PC-9 (cell line): ENCODE measurements at regions of chr11 and their contacts with region 1.

Region 1: GRCh38 chr11:86919557-86920210 is 35.5 kb downstream of the FZD4 start:
- DNase-seq: peak; percentile 38 to 65
- H3K4me3 ChIP-seq: no peak overlapping the region
- H3K27ac ChIP-seq: no peak overlapping the region
- H3K4me1 ChIP-seq: peaks cover 23% of the 10 kb centered on the region
- H3K27me3 ChIP-seq: no peaks in the 10 kb centered on the region
- CTCF ChIP-seq: peak; percentile 86

Region 2: DNA sequence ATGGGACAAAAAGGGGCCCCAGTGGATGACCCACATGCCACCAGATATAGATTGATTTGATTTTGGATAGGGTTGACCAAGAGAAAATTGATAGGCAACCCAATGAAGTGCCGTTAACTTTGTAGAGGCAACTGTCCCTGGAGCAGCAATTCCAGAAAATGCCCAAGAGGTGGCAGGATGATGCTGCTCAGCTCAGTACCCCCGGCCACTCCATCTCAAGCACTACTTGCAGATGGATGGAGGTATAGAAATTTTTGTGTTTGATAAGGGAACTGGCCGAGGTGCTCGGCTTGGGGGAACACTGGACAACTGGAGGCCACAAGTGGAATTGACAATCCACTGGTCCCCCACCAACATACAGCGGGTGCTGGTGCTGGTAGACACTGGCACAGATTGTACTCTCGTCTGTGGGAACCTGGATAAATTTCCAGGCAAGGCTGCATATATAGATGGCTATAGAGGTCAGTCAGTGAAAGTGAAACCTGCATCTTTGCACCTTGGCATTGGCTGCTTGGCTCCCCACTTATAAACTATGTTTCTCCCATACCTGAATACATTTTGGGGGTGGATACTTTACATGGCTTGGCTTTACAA is 978.2 kb before region 1 on chr11:
- CTCF ChIA-PET with region 1: no interaction called
- POLR2A ChIA-PET with region 1: no interaction called
- intact Hi-C with region 1: loop called (anchors 10 kb)
- DNase-seq: peak in 1 of 2 experiments; percentile 22
- H3K4me3 ChIP-seq: no peak overlapping the region
- H3K27ac ChIP-seq: no peak overlapping the region
- H3K4me1 ChIP-seq: no peaks in the 10 kb centered on the region
- H3K27me3 ChIP-seq: no peaks in the 10 kb centered on the region
- CTCF ChIP-seq: peak; percentile 69

Region 3: DNA sequence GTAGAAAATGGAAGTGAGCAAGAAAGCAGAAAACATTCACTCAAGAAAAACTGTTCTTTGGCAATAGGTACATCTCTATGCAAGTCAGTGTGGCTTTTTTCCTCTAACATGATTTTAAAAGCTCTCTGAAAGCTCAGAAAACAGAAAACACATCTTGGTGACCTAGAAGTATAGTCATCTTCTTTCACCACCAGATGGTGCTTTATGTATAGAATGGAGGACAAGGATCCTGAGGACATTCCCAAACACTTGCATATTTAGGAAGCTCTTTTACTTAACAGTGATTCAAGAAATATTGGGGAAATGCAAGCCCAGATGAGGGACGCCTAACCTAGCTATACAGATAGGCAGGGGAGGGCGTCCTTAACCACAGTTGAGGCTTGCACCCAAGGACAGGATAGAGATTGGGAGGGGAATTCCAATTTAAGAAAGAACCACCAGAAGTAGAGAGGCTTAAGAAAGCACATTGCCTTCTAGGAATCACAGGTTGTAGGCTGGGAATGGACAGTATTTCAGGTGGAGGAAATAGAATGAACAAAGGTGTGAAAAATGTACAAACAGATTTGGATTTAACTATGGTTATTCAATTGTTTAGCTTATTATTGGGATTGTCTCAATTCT is 558.8 kb before region 1 on chr11:
- CTCF ChIA-PET with region 1: interaction called, 4 read pairs
- POLR2A ChIA-PET with region 1: no interaction called
- intact Hi-C with region 1: loop called (anchors 2 kb)
- DNase-seq: peak in 1 of 2 experiments; percentile 65
- H3K4me3 ChIP-seq: no peak overlapping the region
- H3K27ac ChIP-seq: no peak overlapping the region
- H3K4me1 ChIP-seq: no peaks in the 10 kb centered on the region
- H3K27me3 ChIP-seq: no peaks in the 10 kb centered on the region
- CTCF ChIP-seq: peak; percentile 77

Region 4: GRCh38 chr11:86497181-86497701 is 422.4 kb before region 1 on chr11:
- CTCF ChIA-PET with region 1: no interaction called
- POLR2A ChIA-PET with region 1: no interaction called
- intact Hi-C with region 1: loop called (anchors 5 kb)
- DNase-seq: peak; percentile 81 to 96
- H3K4me3 ChIP-seq: no peak overlapping the region
- H3K27ac ChIP-seq: peak overlapping the region; percentile 91
- H3K4me1 ChIP-seq: peaks cover 55% of the 10 kb centered on the region
- H3K27me3 ChIP-seq: no peaks in the 10 kb centered on the region
- CTCF ChIP-seq: no peak

Region 5: GRCh38 chr11:86608251-86608799 is 311.4 kb before region 1 on chr11:
- CTCF ChIA-PET with region 1: no interaction called
- POLR2A ChIA-PET with region 1: no interaction called
- intact Hi-C with region 1: loop called (anchors 5 kb)
- DNase-seq: peak; percentile 72 to 73
- H3K4me3 ChIP-seq: no peak overlapping the region
- H3K27ac ChIP-seq: no peak overlapping the region
- H3K4me1 ChIP-seq: peaks cover 22% of the 10 kb centered on the region
- H3K27me3 ChIP-seq: no peaks in the 10 kb centered on the region
- CTCF ChIP-seq: peak; percentile 96

Region 6: DNA sequence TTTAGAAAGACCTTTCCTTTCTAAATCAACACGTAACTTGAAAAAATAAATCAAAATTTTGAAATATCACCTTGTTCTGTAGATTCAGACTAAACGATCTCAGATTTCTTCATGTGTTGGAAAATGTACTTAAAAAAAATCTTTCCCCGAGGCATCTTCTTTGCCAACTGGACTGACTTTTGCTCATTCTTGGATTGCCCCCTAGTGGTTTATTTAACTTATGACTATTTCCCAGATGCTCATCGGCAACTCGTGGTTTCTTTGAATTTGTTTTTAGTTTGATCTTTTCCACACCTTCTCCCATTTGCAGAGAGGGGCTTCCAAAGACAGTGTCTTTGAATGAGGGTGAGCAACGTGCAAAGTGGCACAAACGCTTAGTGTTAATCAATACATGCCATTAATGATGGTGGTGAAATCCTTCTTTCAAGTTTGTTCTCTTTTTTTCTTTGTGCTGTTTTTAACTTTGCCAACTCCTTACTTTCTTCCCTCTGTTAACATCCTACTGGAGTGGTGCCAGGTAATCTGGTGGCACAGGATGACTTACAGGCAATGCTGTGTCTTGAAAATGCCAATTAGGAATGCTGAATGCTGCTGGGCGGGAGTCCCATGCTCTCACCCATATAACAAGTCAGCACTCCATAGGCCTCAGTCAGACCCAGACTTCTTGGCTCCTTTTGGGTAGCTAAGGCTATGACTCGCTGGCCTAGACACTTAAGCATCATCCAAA is 101.1 kb before region 1 on chr11:
- CTCF ChIA-PET with region 1: no interaction called
- POLR2A ChIA-PET with region 1: no interaction called
- intact Hi-C with region 1: loop called (anchors 5 kb)
- DNase-seq: peak in 1 of 2 experiments; percentile 77
- H3K4me3 ChIP-seq: no peak overlapping the region
- H3K27ac ChIP-seq: no peak overlapping the region
- H3K4me1 ChIP-seq: peaks cover 20% of the 10 kb centered on the region
- H3K27me3 ChIP-seq: no peaks in the 10 kb centered on the region
- CTCF ChIP-seq: peak; percentile 94